A549 (cell line): ENCODE measurements at regions of chr10 and their contacts with region 1.

Region 1: DNA sequence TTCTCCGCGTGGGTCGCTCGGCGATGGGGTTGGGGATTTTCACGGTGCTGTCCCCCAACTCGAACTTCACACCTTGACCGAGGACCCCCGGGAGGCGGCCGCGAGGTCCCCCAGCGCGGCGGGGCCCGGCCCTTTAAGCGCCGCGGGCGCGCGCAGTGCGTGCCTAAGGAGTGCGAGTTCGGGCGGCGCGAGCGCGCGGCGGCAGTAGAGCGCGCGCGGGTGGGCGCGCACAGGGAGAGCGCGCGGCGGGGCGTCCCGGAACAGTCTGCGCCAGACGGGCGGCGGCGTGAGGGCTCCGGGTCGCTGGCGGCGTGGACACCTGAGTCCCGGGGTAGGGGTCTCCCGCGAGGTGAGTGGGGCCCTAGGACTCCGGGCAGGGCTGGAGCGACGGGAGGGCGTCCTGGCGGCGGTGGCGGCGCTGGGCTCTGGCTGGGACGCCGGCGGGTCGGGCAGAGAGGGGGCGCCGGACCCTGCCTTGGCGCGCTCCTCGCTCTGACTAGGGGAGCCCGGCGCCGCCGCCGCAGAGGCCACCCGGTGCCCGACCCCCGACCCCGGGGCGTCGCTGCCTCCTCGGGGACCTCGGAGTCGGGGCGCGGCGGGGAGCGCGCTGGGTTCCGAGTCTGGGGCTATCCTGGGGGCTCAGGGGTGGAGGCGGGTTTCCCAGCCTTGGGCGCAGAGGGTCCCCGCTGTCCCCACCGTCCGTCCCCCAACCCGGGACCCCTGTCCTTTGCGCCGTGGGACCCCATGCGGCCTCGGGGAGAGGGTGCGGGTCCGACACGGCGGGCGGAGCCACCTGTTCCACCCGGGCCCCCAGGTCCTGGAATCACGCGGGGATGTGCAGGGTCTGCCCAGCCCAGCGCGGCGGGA is at the start of gene PROSER2:
- DNase-seq: peak; percentile 67 to 77
- ATAC-seq: peak; percentile 85
- H3K4me3 ChIP-seq: peak within 1 kb of the TSS; percentile 99
- H3K27ac ChIP-seq: peak within 1 kb of the TSS; percentile 92 to 93
- H3K4me1 ChIP-seq: peaks cover 34% of the 10 kb centered on the region
- CTCF ChIP-seq: no peak
- EP300 ChIP-seq: no peak
- POLR2A ChIP-seq: peak; percentile 80
- RAD21 ChIP-seq: 0 out of 5 replicates have a peak, but pooled peaks of 1 of the 2 experiments have one; percentile 11
- polyA plus RNA-seq, gene PROSER2: 8.9 and 10.1 TPM in 2 replicates

Region 2: DNA sequence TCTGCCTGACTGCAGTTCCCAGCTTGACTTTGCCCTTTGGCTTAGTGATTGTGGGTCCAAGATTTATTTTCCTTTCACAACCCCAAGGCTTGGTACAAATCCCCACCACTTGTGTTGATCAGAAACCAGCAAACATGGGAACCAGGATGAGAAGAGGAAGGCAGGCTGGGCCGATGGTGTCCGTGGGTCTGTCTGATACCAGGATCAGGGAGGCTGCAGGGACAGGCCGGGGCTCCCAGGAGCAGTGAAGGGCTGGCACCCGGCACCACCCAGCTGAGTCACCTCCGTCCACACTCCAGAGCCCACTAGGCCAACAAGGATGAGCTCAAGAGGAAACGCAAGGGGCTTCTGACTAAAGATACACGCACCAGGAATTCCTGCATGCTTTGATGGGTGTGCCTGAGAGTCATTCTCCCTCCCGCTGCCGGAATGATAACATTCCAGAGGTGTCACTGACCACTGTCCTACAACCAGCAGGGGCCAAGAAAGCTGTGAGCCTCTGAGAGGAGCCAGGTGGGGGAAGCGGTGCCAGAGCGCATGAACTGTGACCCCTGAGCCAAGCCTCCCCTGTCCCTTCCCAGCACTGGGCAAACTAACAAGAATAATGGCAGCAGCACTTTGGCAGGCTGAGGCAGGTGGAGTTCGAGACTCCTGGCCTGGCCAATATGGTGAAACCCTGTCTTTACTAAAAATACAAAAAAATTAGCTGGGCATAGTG is 29.4 kb before region 1 on chr10:
- CTCF ChIA-PET with region 1: interaction called, 77 read pairs
- POLR2A ChIA-PET with region 1: interaction called, 4 read pairs
- DNase-seq: peak; percentile 94 to 95
- ATAC-seq: peak; percentile 96
- H3K4me3 ChIP-seq: 0 out of 3 replicates have a peak overlapping the region, but pooled peaks have one; percentile 9
- H3K27ac ChIP-seq: peak overlapping the region; percentile 80 to 86
- H3K4me1 ChIP-seq: peaks cover 30% of the 10 kb centered on the region
- CTCF ChIP-seq: no peak
- EP300 ChIP-seq: peak in 1 of 2 experiments; percentile 53; a peak in 1 of 5 replicates
- POLR2A ChIP-seq: no peak
- RAD21 ChIP-seq: no peak

Region 3: GRCh38 chr10:11810313-11810766 is 13.0 kb before region 1 on chr10:
- CTCF ChIA-PET with region 1: interaction called, 57 read pairs
- POLR2A ChIA-PET with region 1: no interaction called
- DNase-seq: peak in 1 of 2 experiments; percentile 56
- ATAC-seq: peak; percentile 35 to 77; a peak in 3 of 6 replicates
- H3K4me3 ChIP-seq: no peak overlapping the region
- H3K27ac ChIP-seq: peak overlapping the region in 1 of 2 experiments; percentile 44; a peak in 1 of 6 replicates
- H3K4me1 ChIP-seq: peaks cover 12% of the 10 kb centered on the region
- CTCF ChIP-seq: no peak
- EP300 ChIP-seq: no peak
- POLR2A ChIP-seq: no peak
- RAD21 ChIP-seq: no peak

Region 4: DNA sequence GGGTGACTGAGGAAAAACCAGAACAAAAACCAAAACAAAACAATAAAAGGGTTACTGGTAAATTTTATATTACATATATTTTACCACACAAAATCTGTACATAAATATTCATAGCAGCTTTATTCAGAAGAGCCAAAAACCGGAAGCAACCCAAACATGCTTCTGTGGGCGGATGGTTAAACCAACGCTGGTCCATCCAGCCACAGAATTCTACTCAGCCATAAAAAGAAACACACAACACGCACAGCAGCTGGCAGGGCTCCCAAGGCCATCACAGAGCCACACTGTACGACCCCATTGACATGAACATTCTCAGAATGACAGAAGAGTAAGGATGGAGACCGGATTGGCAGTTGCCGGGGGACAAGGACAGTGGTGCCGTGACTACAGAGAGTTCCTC is 83.4 kb after region 1 on chr10:
- CTCF ChIA-PET with region 1: no interaction called
- POLR2A ChIA-PET with region 1: no interaction called
- DNase-seq: no peak
- ATAC-seq: no peak
- H3K4me3 ChIP-seq: no peak overlapping the region
- H3K27ac ChIP-seq: no peak overlapping the region
- H3K4me1 ChIP-seq: peaks cover 2% of the 10 kb centered on the region; the same call in 2 of the 3 replicates
- CTCF ChIP-seq: no peak
- EP300 ChIP-seq: no peak
- POLR2A ChIP-seq: no peak
- RAD21 ChIP-seq: no peak

Region 5: GRCh38 chr10:12107781-12108180 is 284.4 kb after region 1 on chr10:
- CTCF ChIA-PET with region 1: no interaction called
- POLR2A ChIA-PET with region 1: no interaction called
- DNase-seq: no peak
- ATAC-seq: no peak
- H3K4me3 ChIP-seq: no peak overlapping the region
- H3K27ac ChIP-seq: no peak overlapping the region
- H3K4me1 ChIP-seq: no peaks in the 10 kb centered on the region
- CTCF ChIP-seq: no peak
- EP300 ChIP-seq: no peak
- POLR2A ChIP-seq: no peak
- RAD21 ChIP-seq: no peak